Body of pancreas (tissue), 4 donors: ENCODE measurements at regions of chr5 and their contacts with region 1.

Region 1: DNA sequence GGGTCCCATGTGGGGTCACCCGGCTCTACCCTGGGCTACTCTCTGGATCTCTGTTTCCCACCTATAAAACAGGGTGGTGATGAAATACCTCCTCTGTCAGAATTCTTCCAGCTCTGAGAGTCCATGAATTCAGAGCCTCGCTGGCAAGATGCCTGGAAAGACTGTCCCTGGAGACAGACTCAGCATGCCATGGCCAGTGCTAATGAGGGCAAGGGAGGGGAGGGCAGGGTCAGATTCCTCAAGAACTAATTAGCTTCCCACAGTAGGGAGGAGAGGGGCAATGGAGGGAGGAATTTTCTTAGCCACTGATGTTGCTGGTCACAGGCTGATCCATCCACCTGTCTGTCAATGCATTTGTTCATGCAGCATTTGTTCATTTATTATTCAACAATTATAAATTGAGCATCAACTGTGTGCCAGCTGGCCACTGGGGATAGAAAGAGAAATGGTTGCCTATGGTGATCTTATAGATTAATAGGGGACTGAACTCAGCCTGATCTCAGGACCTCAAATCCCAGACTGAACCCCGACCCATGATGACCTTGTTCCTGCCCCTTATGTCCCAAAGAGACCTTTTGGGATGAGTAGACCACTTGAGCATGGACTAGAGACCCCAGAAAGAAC is 4.7 kb downstream of the SYNPO start:
- DNase-seq: peak; percentile 42 to 61 (median 58)
- ATAC-seq: no peak
- H3K4me3 ChIP-seq: no peak overlapping the region
- H3K27ac ChIP-seq: peak overlapping the region; percentile 12 to 88 (median 86)
- H3K4me1 ChIP-seq: peaks cover 67% of the 10 kb centered on the region
- H3K27me3 ChIP-seq: no peaks in the 10 kb centered on the region
- CTCF ChIP-seq: no peak
- POLR2A ChIP-seq: no peak

Region 2: DNA sequence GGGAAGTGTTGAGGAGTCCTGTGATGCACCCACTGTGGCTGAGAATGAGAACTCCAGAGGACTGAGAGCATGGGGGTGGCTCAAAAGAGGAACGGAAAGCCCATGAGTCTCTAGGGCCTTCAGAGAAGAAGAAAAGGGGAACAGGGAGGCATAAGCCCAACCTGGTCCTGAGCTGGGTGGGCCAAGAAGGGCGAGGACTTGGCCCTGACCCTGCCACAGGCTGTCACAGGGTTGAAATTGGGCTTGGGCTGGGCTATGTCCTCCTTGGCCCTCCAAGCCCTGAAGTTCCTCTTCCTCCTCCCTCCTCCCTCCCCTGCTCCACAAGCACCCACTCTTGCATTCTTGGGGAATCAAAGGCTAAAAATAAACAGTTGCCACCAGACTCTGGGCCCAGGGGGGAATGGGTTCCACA is 964.4 kb before region 1 on chr5:
- intact Hi-C with region 1: no loop called
- DNase-seq: peak in 1 of 4 donors; percentile 68
- ATAC-seq: no peak
- H3K4me3 ChIP-seq: no peak overlapping the region
- H3K27ac ChIP-seq: no peak overlapping the region
- H3K4me1 ChIP-seq: no peaks in the 10 kb centered on the region
- H3K27me3 ChIP-seq: no peaks in the 10 kb centered on the region
- CTCF ChIP-seq: no peak
- POLR2A ChIP-seq: peak in 1 of 3 donors; percentile 39

Region 3: DNA sequence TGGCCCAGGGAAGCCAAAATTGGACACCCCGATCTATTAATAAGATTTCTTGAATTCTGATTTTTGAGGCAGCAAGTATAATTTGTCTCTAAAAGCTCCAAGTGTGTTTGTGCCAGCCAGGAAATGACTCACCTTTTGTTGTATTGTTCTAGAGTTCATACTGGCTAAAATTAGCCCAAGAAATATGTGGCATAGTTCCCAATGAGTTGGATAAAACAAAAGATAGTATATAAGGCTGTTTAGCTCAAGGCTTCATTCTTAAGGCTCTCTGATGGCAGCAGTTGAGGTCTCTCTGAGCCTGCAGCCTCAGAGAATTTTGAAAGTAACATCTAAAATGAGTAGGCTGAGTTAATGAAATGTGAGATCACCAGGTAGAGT is 623.0 kb before region 1 on chr5:
- intact Hi-C with region 1: no loop called
- DNase-seq: peak in 1 of 4 donors; percentile 13
- ATAC-seq: peak; percentile 42
- H3K4me3 ChIP-seq: no peak overlapping the region
- H3K27ac ChIP-seq: peak overlapping the region in 1 of 4 donors; percentile 38
- H3K4me1 ChIP-seq: peaks cover 8% of the 10 kb centered on the region
- H3K27me3 ChIP-seq: no peaks in the 10 kb centered on the region
- CTCF ChIP-seq: no peak
- POLR2A ChIP-seq: peak in 1 of 3 donors; percentile 10

Region 4: GRCh38 chr5:150574818-150575547 is 70.2 kb before region 1 on chr5:
- intact Hi-C with region 1: loop called (anchors 5 kb)
- DNase-seq: no peak
- ATAC-seq: no peak
- H3K4me3 ChIP-seq: no peak overlapping the region
- H3K27ac ChIP-seq: no peak overlapping the region
- H3K4me1 ChIP-seq: no peaks in the 10 kb centered on the region
- H3K27me3 ChIP-seq: no peaks in the 10 kb centered on the region
- CTCF ChIP-seq: no peak
- POLR2A ChIP-seq: no peak

Region 5: GRCh38 chr5:150816946-150817345 is 171.8 kb after region 1 on chr5:
- intact Hi-C with region 1: no loop called
- DNase-seq: no peak
- ATAC-seq: no peak
- H3K4me3 ChIP-seq: no peak overlapping the region
- H3K27ac ChIP-seq: no peak overlapping the region
- H3K4me1 ChIP-seq: no peaks in the 10 kb centered on the region
- H3K27me3 ChIP-seq: no peaks in the 10 kb centered on the region
- CTCF ChIP-seq: no peak
- POLR2A ChIP-seq: no peak

Region 6: GRCh38 chr5:151141535-151141934 is 496.3 kb after region 1 on chr5:
- intact Hi-C with region 1: no loop called
- DNase-seq: no peak
- ATAC-seq: no peak
- H3K4me3 ChIP-seq: no peak overlapping the region
- H3K27ac ChIP-seq: no peak overlapping the region
- H3K4me1 ChIP-seq: no peaks in the 10 kb centered on the region
- H3K27me3 ChIP-seq: no peaks in the 10 kb centered on the region
- CTCF ChIP-seq: no peak
- POLR2A ChIP-seq: no peak